Common myeloid progenitor, CD34-positive (primary cell): ENCODE measurements at regions of chr17 and their contacts with region 1.

Region 1: DNA sequence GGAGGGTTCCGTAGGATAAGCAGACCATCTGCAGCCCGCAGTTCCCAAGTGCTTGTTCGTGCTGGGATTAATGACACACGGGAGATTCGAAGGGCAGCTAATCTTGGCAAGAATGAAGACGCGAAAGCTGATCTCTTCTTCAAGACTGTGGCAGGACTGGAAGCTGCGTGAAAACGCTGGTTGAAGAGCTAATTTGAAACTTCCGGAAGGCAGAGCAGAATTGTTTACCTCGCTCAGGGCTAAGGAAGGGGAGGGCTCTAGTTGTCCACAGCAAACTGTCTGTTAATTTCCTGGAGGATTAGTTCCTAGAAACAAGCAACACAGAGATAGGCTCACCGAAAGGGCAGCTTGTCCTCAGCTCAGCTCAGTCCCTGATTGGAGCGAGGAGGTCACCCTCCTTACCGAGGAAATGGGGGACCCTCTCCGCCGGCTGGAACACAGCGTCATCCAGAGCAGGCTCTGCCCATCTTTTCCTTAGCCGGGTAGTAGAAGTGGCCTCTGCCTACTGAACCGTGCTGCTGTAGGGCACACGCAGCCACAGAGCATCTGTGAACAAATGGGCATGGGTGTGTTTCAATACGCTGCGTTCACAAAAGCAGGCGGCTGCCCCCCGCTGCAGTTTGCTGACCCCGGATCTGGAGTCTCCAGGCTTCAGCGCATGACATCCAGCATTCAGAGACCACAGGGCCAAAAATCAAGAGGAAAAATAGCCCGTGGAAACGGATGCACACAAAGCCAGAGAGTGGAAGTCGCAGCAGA is 16.7 kb upstream of the BAIAP2 start:
- DNase-seq: peak in 2 of 3 donors; percentile 62 to 74
- H3K4me3 ChIP-seq: peak overlapping the region; percentile 27 to 84 (median 62)
- H3K27ac ChIP-seq: peak overlapping the region; percentile 69 to 83
- H3K4me1 ChIP-seq: peaks cover 0 to 32% (median 29%) of the 10 kb centered on the region in 4 experiments
- H3K27me3 ChIP-seq: no peaks in the 10 kb centered on the region

Region 2: GRCh38 chr17:80959330-80960036 is 58.7 kb before region 1 on chr17:
- CTCF ChIA-PET with region 1: no interaction called
- POLR2A ChIA-PET with region 1: no interaction called
- DNase-seq: no peak
- H3K4me3 ChIP-seq: no peak overlapping the region
- H3K27ac ChIP-seq: no peak overlapping the region
- H3K4me1 ChIP-seq: no peaks in the 10 kb centered on the region
- H3K27me3 ChIP-seq: no peaks in the 10 kb centered on the region

Region 3: DNA sequence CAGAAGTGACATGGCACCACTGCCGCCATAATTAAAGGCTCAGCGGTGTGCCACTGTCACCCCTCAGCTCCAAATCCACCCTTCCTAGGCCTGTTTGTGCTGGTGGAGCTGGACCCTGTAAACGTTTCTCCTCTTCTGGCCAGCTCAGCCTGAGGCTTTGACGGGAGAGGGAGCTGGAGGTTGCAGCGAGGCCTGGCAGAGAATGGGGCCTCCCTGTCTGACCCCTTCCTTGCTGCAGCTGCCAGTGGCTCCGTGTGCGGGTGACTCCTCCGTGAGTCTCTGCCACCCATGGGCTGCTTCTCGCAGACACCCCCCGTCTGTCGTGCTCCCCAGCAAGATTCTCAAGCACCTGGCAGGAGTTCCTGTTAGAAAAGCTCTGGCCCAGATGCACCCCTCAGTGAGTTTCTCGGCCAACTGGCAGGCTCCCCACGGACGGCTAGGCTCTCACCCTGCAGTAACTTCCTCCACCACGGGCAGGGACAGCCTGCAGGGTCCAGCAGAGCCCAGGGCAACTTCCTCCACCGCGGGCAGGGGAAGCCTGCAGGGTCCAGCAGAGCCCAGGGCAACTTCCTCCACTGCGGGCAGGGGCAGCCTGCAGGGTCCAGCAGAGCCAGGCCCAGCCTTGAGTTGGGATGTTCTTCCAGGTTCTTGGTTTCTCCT is 31.3 kb before region 1 on chr17:
- CTCF ChIA-PET with region 1: interaction called, 16 read pairs
- POLR2A ChIA-PET with region 1: no interaction called
- DNase-seq: peak in 2 of 3 donors; percentile 42 to 51
- H3K4me3 ChIP-seq: peak overlapping the region in 1 of 7 experiments; percentile 10
- H3K27ac ChIP-seq: no peak overlapping the region
- H3K4me1 ChIP-seq: peaks cover 2 to 41% (median 34%) of the 10 kb centered on the region in 4 experiments
- H3K27me3 ChIP-seq: no peaks in the 10 kb centered on the region

Region 4: GRCh38 chr17:81034168-81034777 is 16.1 kb after region 1 on chr17:
- CTCF ChIA-PET with region 1: interaction called, 10 read pairs
- POLR2A ChIA-PET with region 1: interaction called, 3 read pairs
- DNase-seq: peak in 2 of 3 donors; percentile 32 to 47
- H3K4me3 ChIP-seq: peak overlapping the region; percentile 45 to 88 (median 75)
- H3K27ac ChIP-seq: peak overlapping the region in 1 of 2 experiments; percentile 43
- H3K4me1 ChIP-seq: peaks cover 0 to 39% (median 35%) of the 10 kb centered on the region in 4 experiments
- H3K27me3 ChIP-seq: peaks cover 0 to 27% (median 7%) of the 10 kb centered on the region in 5 experiments

Region 5: GRCh38 chr17:81064678-81065475 is 46.7 kb after region 1 on chr17:
- CTCF ChIA-PET with region 1: no interaction called
- POLR2A ChIA-PET with region 1: no interaction called
- DNase-seq: no peak
- H3K4me3 ChIP-seq: no peak overlapping the region
- H3K27ac ChIP-seq: no peak overlapping the region
- H3K4me1 ChIP-seq: peaks cover 0 to 8% (median 0%) of the 10 kb centered on the region in 4 experiments
- H3K27me3 ChIP-seq: no peaks in the 10 kb centered on the region